A549 (cell line): ENCODE measurements at regions of chr17 and their contacts with region 1.

Region 1: DNA sequence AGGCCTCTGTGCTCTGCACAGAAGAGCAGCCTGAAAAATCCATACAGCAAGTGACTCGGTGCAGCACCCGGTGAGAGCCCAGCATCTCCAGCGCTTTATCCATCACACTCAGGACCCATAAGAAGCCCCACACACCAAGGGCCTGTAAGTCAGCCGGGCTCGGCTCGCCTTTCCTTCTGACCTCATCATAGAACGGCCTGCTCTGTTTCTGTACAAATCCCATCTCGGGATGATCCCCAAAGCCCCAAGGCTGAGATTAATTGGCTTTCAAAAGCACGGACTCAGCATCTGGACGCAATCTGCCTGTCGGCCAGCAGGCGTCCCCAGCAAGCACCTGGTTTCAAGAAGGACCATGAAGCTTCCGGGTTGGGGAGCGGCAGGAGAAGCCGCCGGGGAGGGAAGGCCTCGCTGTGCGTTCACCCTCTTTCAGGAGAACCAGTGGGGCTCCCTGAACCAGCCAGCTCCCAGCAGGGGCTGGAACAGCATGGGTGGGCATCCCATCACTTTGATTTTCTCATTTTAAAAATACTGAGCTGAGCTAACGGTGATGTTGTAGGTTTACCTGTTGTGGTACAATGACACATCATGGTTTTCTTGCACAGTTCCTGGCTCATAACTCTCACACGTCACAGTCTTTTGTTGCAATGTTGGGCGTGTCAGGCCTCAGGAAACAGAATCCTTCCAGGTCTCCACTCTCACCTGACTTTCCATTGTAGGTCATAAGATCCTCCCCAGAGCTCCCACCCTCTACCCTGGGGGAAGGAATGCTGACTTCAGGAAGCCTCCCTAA is 6.7 kb downstream of the CCDC57 start:
- DNase-seq: peak; percentile 91 to 94
- ATAC-seq: peak; percentile 91 to 94
- H3K4me3 ChIP-seq: no peak overlapping the region
- H3K27ac ChIP-seq: peak overlapping the region; percentile 84 to 86
- H3K4me1 ChIP-seq: peaks cover 24% of the 10 kb centered on the region
- CTCF ChIP-seq: peak; percentile 78
- EP300 ChIP-seq: no peak
- POLR2A ChIP-seq: peak; percentile 81
- RAD21 ChIP-seq: peak; percentile 72 to 75

Region 2: GRCh38 chr17:81460856-81461460 is 745.0 kb before region 1 on chr17:
- CTCF ChIA-PET with region 1: no interaction called
- POLR2A ChIA-PET with region 1: no interaction called
- DNase-seq: no peak
- ATAC-seq: no peak
- H3K4me3 ChIP-seq: no peak overlapping the region
- H3K27ac ChIP-seq: no peak overlapping the region
- H3K4me1 ChIP-seq: peaks cover 10% of the 10 kb centered on the region; the same call in 2 of the 3 replicates
- CTCF ChIP-seq: no peak
- EP300 ChIP-seq: no peak
- POLR2A ChIP-seq: no peak
- RAD21 ChIP-seq: no peak

Region 3: DNA sequence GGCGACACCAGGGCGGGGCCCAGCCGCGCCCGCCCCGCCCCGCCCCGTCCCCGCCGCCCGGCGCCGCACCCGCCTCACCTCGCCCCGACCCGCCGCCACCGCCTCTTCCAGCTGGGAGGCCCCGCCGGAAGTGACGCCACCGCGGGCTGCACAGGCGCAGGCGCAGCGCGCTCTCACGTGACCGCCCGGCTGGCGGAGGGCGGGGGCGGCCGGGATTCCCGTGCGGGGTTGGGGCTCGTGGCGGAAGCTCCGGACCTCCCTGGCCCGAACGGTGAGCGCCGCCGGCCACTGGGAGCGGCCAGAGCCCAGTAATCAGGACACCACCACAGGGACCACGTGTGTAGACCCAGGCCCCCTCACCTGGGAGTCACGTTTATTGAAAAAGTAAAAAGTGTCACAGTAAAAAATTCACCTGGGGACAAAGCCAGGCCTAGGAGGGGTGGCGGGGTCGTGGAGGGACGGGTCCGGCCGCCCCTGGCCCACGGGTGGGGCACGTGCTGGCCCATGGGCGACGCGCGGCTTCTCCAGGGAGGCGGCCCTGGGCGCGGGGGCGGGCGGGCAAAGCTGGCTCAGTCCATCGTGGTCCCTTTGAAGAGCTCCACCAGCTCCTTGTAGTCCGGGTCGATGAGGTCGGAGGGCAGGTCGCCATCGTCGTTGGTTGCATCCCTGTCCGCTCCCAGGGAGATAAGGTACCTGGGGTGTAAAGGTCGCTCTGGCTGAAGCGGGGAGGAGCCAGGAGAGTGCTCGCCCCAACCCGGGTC is 372.6 kb before region 1 on chr17 and contains the start of gene MCRIP1:
- CTCF ChIA-PET with region 1: no interaction called
- POLR2A ChIA-PET with region 1: no interaction called
- DNase-seq: peak; percentile 96 to 97
- ATAC-seq: peak; percentile 81 to 84
- H3K4me3 ChIP-seq: peak within 1 kb of the TSS; percentile 94
- H3K27ac ChIP-seq: peak within 1 kb of the TSS; percentile 93 to 99
- H3K4me1 ChIP-seq: peaks cover 21% of the 10 kb centered on the region; the same call in 2 of the 3 replicates
- CTCF ChIP-seq: no peak
- EP300 ChIP-seq: no peak
- POLR2A ChIP-seq: peak; percentile 88
- RAD21 ChIP-seq: no peak
- polyA plus RNA-seq, gene MCRIP1: 30.9 and 32.0 TPM in 2 replicates

Region 4: GRCh38 chr17:82193520-82194220 is 12.2 kb before region 1 on chr17:
- CTCF ChIA-PET with region 1: interaction called, 37 read pairs
- POLR2A ChIA-PET with region 1: interaction called, 3 read pairs
- DNase-seq: no peak
- ATAC-seq: no peak
- H3K4me3 ChIP-seq: no peak overlapping the region
- H3K27ac ChIP-seq: no peak overlapping the region
- H3K4me1 ChIP-seq: no peaks in the 10 kb centered on the region
- CTCF ChIP-seq: no peak
- EP300 ChIP-seq: no peak
- POLR2A ChIP-seq: no peak
- RAD21 ChIP-seq: no peak

Region 5: GRCh38 chr17:82225368-82226029 is 19.6 kb after region 1 on chr17:
- CTCF ChIA-PET with region 1: interaction called, 28 read pairs
- POLR2A ChIA-PET with region 1: interaction called, 4 read pairs
- DNase-seq: no peak
- ATAC-seq: no peak
- H3K4me3 ChIP-seq: no peak overlapping the region
- H3K27ac ChIP-seq: peak overlapping the region in 1 of 2 experiments; percentile 36; a peak in 2 of 6 replicates
- H3K4me1 ChIP-seq: peaks cover 10% of the 10 kb centered on the region
- CTCF ChIP-seq: no peak
- EP300 ChIP-seq: no peak
- POLR2A ChIP-seq: no peak
- RAD21 ChIP-seq: no peak

Region 6: DNA sequence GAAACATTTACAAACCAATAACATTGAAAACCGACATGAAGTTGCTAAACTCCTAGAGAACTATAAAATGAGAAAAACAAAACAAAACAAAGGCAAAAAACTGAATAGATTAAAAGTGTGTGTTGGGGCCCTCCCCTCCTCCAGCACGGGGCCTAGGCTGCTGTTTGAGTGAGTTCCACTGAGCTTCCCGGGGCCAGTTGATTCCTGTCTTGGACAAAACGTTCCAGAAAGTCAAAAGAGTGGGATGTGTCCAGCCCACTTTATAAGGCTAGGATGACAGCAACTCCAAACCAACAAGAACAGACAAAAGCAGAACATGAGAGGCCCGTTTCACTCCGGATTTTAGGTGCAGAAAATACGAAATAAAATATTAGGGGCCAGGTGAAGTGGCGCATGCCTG is 79.2 kb after region 1 on chr17:
- CTCF ChIA-PET with region 1: no interaction called
- POLR2A ChIA-PET with region 1: no interaction called
- DNase-seq: no peak
- ATAC-seq: no peak
- H3K4me3 ChIP-seq: no peak overlapping the region
- H3K27ac ChIP-seq: peak overlapping the region; percentile 10 to 31; a peak in 4 of 6 replicates
- H3K4me1 ChIP-seq: peaks cover 63% of the 10 kb centered on the region
- CTCF ChIP-seq: no peak
- EP300 ChIP-seq: no peak
- POLR2A ChIP-seq: no peak
- RAD21 ChIP-seq: no peak

Region 7: DNA sequence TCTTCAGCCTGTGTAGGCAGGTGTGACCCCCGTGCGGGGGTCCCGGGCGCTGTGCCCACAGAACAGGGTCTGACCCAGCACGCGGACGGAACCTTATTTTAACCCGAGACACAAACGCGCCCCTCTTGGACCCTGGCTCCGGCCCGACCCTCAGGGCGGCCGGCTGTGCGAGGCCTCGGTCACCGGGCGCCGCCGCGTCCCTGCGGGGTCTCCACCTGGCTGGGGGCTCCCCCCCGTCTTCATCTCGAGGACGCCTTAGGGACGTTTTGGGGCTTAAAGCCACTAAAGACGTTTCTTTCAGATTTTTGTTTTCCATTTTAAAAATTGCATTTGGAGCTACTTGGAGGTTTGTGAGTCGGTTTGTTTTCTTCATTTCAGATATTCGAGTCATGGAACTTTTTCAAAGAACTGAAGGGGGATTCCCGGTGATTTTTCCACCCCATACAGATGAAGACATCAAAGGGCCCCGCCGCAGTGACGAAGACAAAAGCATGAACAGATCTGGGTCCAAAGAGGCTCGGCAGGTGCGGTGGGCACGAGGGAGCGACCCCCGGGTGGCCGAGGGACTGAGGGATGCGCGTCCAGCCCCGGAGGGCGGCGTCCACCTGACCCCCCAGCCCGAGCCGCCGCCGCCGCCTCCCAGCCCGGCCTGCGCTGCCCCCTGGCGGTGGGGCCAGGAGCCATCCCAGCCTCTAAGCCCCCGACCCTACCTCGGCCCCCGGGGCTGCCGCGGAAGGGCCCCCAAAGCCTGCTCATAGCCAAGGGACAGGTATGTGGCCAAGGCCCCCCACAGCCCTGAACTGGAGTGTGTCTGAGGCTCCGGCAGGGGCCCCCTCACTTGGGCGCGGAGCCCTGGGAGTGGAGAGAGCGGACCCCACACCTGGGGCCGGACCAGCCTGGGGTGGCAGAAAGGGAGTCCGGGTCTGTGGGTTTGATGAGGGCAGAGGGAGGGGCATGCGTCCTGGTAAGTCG is 115.3 kb after region 1 on chr17:
- CTCF ChIA-PET with region 1: interaction called, 15 read pairs
- POLR2A ChIA-PET with region 1: no interaction called
- DNase-seq: peak in 1 of 2 experiments; percentile 66
- ATAC-seq: peak; percentile 23 to 82; a peak in 3 of 6 replicates
- H3K4me3 ChIP-seq: peak overlapping the region; percentile 32
- H3K27ac ChIP-seq: peak overlapping the region; percentile 60 to 62; a peak in 5 of 6 replicates
- H3K4me1 ChIP-seq: peaks cover 12% of the 10 kb centered on the region; the same call in 2 of the 3 replicates
- CTCF ChIP-seq: peak; percentile 96
- EP300 ChIP-seq: no peak
- POLR2A ChIP-seq: no peak
- RAD21 ChIP-seq: peak; percentile 80 to 97

Region 8: DNA sequence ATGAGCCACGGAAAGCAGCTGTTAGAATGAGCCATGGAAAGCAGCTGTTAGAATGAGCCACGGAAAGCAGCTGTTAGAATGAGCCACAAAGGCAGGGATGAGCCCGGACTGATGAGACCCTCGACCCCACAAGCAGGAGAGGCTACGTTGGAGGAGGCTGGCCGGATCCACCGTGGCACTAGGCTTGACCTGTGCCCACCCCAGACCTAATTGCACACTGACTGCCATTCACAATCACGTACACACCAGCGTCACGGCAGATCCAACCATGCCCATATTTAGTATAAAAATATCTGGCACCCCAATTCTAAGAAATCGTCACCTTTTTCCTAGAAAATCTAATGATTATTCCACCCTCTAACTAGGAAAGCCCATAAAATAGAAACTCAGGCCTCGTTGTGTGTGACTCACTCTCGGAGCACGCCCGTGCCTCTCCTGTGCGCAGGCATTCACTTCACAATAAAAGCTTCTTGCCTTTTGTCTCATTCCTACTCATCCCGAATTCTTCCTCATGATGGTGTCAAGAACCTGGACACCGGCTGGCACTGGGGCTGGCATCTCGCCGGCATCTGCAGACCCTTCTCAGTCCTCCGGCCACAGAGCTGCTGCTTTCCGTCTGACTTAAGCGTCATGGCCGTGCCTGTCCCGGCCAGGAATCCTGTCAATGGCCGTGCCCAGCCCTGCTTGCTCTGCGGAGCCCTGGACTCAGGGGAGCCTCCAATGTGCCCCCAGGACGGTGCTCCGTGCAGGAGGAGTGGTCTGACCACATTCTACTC is 133.1 kb after region 1 on chr17:
- CTCF ChIA-PET with region 1: interaction called, 10 read pairs
- POLR2A ChIA-PET with region 1: no interaction called
- DNase-seq: peak; percentile 86 to 94
- ATAC-seq: peak; percentile 81 to 89
- H3K4me3 ChIP-seq: peak overlapping the region; percentile 37
- H3K27ac ChIP-seq: peak overlapping the region; percentile 86 to 92
- H3K4me1 ChIP-seq: peaks cover 42% of the 10 kb centered on the region
- CTCF ChIP-seq: no peak
- EP300 ChIP-seq: no peak
- POLR2A ChIP-seq: peak; percentile 29; the same call in 1 of the 2 replicates
- RAD21 ChIP-seq: no peak; a peak in 1 of 5 replicates